Activated CD8-positive, alpha-beta T cell treated with anti-CD3 and anti-CD28 coated beads for 36 hours (primary cell): ENCODE measurements at regions of chr15 and their contacts with region 1.

Region 1: DNA sequence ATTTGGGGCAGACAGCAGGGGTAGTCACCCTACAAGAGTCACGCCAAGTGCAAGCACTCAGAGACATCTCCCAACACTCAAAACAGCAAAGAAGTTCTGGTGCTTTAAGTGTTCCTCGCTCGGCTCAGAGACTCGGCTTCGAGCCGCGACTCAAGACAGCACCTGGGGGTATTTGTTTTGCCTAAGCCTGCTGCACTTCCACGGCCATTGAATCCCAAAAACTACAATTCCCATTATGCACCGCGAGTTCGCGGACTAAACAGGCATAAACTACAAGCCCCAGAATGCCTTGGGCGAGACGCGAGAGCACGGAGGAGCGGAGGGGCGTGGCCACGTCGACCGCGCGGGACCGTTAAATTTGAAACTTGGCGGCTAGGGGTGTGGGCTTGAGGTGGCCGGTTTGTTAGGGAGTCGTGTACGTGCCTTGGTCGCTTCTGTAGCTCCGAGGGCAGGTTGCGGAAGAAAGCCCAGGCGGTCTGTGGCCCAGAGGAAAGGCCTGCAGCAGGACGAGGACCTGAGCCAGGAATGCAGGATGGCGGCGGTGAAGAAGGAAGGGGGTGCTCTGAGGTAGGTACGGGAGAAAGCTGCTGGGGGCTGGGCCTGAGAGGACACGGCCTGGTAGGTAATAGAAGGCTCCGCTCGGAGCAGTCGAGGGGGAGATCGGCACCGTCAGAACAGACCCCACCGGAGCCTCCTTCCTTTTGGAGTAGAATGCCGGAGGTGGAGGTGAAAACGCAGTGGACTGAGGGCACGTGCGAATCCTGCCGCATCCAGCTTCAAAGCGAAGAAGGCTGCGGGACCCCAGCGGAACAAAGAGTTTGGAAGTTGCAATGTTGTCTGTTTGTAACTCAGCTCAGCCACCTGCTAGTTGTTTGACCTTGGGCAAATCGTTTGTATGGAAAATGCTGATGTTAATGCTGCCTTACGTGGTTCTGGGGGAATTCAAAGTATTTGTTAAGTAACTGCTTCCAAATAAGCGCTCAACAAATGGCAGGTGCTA is at the start of gene BUB1B:
- DNase-seq: peak; percentile 97
- ATAC-seq: peak; percentile 96
- H3K4me3 Mint-ChIP-seq: no peak within 1 kb of the TSS
- H3K27ac Mint-ChIP-seq: no peak within 1 kb of the TSS
- H3K4me1 Mint-ChIP-seq: peaks cover 4% of the 10 kb centered on the region
- H3K27me3 Mint-ChIP-seq: no peaks in the 10 kb centered on the region
- CTCF ChIP-seq: no peak
- total RNA-seq, gene BUB1B: 79.6 to 82.5 TPM

Region 2: DNA sequence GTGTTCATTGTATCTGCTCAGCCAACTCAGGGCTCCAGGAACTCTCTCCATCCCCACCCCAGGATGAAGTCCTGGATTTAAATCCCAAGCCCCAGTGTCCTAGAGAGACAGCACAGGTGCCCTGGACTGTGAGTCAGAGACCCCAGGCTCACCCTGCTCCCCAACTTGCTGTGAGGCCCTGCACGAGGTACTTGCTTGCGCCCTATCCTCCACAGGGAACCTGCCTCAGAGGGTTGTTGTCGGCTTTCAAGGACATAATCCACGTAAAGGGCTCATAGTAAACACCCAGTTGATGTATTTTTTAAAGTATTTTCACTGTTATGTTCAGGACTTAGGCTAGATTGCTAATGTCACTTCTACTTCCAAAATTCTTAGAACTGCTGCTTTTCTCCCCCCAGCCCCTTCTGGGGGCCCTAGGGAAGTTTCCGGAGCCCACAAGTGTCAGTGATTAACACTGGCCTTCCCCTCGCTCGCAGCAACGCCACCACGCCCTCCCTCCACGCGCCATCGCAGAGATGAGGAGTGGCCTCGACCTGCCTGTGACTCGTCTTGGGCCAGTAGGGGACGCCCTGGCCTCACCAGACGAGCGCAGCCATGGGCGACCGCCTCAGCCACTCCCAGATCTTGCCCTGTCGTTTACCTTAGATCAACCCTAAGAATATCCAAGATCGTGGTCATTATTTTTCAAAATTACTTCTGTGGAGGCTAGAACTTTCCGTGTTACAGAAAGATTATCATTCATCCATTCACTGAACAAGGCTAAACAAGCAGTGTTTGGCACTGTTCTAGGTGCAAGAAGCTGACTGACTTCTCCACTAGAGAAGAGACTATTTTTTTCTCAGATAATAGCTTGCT is 116.0 kb before region 1 on chr15:
- CTCF ChIA-PET with region 1: interaction called, 24 read pairs
- POLR2A ChIA-PET with region 1: interaction called, 10 read pairs
- intact Hi-C with region 1: loop called (anchors 5 kb)
- DNase-seq: peak; percentile 95
- ATAC-seq: peak; percentile 85
- H3K4me3 Mint-ChIP-seq: peak overlapping the region; percentile 9
- H3K27ac Mint-ChIP-seq: peak overlapping the region; percentile 85
- H3K4me1 Mint-ChIP-seq: peaks cover 85% of the 10 kb centered on the region
- H3K27me3 Mint-ChIP-seq: no peaks in the 10 kb centered on the region
- CTCF ChIP-seq: peak; percentile 96

Region 3: DNA sequence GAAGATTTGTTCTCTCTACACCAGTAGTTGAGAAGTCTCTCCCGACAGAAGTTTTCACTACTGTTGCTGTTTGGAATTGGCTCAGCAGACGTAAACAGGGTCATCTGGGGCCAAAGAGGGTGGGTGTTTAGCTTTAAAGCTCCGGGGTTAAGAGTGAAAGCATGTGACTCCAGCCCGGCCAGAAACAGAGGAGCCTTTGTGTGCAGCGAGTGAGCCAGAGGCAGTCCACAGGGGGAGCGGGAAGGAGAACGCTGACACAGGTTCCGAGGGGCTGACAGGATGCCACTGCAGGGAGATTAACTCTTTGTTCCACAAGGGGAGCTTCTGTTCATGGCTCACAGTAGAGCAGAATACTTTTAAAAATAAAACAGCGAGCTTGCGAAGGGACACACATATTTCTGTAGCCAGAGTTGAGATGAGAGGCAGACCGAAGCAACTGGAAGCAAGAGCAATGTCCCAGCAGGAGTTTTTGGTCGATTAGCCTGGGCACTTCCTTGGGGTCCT is 79.2 kb before region 1 on chr15:
- CTCF ChIA-PET with region 1: no interaction called
- POLR2A ChIA-PET with region 1: no interaction called
- intact Hi-C with region 1: no loop called
- DNase-seq: no peak
- ATAC-seq: peak; percentile 57
- H3K4me3 Mint-ChIP-seq: peak overlapping the region; percentile 37
- H3K27ac Mint-ChIP-seq: no peak overlapping the region
- H3K4me1 Mint-ChIP-seq: peaks cover 42% of the 10 kb centered on the region
- H3K27me3 Mint-ChIP-seq: peaks cover 29% of the 10 kb centered on the region
- CTCF ChIP-seq: no peak